Mammary epithelial cell (primary cell): ENCODE measurements at regions of chr7 and their contacts with region 1.

Region 1: GRCh38 chr7:77425101-77426051 is 9.2 kb upstream of the GSAP start:
- DNase-seq: peak; percentile 93
- H3K4me3 ChIP-seq: peak overlapping the region in 2 of 3 experiments; percentile 7 to 16
- H3K27ac ChIP-seq: peak overlapping the region; percentile 68
- H3K4me1 ChIP-seq: peaks cover 35% of the 10 kb centered on the region
- H3K27me3 ChIP-seq: no peaks in the 10 kb centered on the region
- CTCF ChIP-seq: no peak

Region 2: DNA sequence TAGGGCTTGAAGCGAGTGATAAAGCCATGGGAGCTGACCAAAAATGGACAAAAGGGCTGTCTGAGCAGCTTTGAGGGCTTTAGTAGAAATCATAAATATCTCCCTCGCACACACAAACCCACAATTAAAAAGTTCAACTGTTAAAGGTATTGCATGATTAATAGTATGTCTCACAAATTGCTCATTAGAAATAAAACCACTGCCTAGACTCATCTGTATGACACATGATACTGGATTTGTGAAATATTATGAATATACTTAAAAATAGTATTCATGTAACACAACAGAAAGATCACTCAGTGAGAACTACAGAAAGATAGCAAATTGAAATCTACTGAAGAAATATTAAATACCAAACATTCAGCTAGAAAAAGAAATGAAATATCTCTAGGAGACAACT is 99.9 kb after region 1 on chr7:
- CTCF ChIA-PET with region 1: no interaction called
- dilution Hi-C with region 1: no loop called
- in situ Hi-C with region 1: no loop called
- intact Hi-C with region 1: loop called (anchors 5 kb)
- DNase-seq: peak; percentile 76
- H3K4me3 ChIP-seq: no peak overlapping the region
- H3K27ac ChIP-seq: peak overlapping the region; percentile 27
- H3K4me1 ChIP-seq: peaks cover 18% of the 10 kb centered on the region
- H3K27me3 ChIP-seq: no peaks in the 10 kb centered on the region
- CTCF ChIP-seq: no peak